Activated CD8-positive, alpha-beta T cell treated with anti-CD3 and anti-CD28 coated beads for 36 hours (primary cell): ENCODE measurements at regions of chr16 and their contacts with region 1.

Region 1: DNA sequence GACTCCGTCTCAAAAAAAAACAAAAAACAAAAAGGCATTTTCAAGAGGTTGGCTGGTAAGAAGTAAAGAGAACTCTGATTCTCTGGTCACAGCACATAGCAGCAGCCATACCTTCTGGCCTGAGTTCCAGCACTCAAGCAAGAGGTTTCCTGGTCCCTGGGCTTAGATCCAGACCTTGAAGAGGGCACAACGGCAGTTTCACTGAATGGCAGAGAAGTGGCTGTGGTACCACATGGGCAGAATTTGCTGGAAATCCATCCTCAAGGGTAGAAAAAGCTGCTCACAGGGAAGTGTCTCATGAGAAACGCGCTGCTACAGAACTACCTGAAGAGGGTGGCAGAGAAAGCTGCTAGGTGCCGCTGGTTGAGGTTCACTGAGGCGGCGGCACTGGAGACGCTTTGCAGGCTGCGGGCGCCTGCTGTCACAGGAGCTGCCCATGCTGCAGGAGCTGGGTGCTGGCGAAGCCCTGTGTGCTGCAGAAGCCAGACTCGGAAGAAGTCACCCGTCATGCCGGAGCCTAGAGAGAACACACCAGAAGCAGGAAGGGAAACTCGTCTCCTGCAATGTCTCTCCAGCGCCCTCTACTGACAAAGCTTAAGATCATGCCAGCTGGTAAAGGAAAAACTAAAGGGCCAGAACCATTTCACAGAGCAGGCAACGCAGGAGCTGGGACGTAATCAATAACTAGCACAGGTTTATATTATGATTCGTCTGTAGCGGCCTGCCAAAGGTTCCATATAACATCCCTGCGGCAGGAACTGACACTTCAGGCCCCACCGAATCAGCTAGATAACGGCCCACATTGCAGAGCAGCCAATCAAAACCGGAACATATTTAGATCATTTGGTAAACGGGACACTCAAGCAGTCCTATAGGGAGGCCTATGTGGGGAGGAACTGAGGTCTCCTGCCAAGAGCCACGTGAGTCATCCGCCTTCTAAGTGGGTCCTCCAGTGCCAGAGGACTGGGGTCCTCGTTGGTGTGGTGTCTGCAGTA is 5.4 kb upstream of the ZNF213 start:
- DNase-seq: peak; percentile 79
- ATAC-seq: peak; percentile 77
- H3K4me3 Mint-ChIP-seq: peak overlapping the region; percentile 85
- H3K27ac Mint-ChIP-seq: peak overlapping the region; percentile 86
- H3K4me1 Mint-ChIP-seq: peaks cover 42% of the 10 kb centered on the region
- H3K27me3 Mint-ChIP-seq: no peaks in the 10 kb centered on the region
- CTCF ChIP-seq: peak; percentile 96

Region 2: DNA sequence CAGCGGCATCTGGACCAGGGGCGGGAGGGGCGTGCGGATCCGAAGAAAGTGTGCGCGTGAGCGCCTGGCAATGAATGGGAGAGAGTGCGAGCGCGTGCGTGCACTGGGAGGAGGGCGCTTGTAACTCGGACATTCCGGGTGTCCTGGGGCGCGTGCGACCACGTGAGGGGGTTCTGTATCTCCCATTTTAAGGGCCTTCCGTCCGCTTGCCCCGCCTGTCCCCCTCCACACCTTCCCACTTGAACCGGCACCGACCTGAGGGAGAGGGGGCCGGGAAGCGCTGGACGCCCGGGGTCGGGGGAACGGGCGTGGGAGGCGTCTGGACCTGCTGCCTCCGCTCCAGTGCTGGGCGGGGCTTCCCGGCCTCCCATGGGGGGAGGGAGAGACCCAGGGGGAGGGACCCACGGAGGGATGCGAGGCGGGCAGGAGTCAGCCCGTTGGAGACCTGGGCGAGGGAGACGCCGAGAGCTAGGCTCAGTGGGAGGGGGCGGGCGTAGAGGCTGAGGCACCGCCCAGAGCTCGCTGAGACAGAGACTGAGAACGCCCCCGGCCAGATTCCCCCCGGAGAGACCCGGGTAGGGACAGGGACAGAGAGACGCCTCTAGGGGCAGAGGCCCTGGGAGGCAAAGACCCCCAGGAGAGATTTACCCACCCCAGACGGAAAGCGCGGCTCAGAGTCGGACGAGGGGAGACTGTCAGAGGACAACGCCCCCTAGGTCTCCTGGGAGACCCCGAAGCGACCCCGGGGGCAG is 165.5 kb before region 1 on chr16 and contains the start of gene KREMEN2:
- CTCF ChIA-PET with region 1: no interaction called
- POLR2A ChIA-PET with region 1: no interaction called
- intact Hi-C with region 1: no loop called
- DNase-seq: peak; percentile 59
- ATAC-seq: peak; percentile 19
- H3K4me3 Mint-ChIP-seq: peak within 1 kb of the TSS; percentile 65
- H3K27ac Mint-ChIP-seq: no peak within 1 kb of the TSS
- H3K4me1 Mint-ChIP-seq: peaks cover 30% of the 10 kb centered on the region
- H3K27me3 Mint-ChIP-seq: peaks cover 34% of the 10 kb centered on the region
- CTCF ChIP-seq: no peak
- total RNA-seq, gene KREMEN2: 0.22 TPM in 1 of 2 experiments, not detected in the other

Region 3: GRCh38 chr16:2980227-2981086 is 149.0 kb before region 1 on chr16 and contains the start of gene PKMYT1:
- CTCF ChIA-PET with region 1: no interaction called
- POLR2A ChIA-PET with region 1: no interaction called
- intact Hi-C with region 1: no loop called
- DNase-seq: peak; percentile 94
- ATAC-seq: peak; percentile 94
- H3K4me3 Mint-ChIP-seq: peak within 1 kb of the TSS; percentile 87
- H3K27ac Mint-ChIP-seq: peak within 1 kb of the TSS; percentile 86
- H3K4me1 Mint-ChIP-seq: peaks cover 13% of the 10 kb centered on the region
- H3K27me3 Mint-ChIP-seq: no peaks in the 10 kb centered on the region
- CTCF ChIP-seq: no peak
- total RNA-seq, gene PKMYT1: 121 to 123 TPM

Region 4: DNA sequence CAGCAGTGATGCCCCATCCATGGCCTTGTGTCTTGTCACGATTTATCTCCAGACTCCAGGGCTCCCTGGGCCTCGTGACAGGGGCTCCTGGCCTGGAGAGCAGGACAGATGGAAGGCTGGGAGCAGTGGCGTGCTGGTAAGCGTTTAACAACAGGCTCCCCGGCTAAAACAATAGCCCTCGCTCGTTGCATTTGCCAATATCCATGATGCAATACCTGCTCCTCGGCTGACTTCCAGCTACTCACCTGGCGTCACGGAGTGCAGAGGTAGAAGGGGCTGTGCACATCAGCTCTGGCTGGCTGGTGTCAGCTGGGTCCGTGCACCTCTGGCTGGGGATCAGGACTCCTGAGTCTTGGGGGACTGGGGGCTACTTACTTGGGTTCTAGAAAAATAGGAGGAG is 91.2 kb before region 1 on chr16:
- CTCF ChIA-PET with region 1: interaction called, 19 read pairs
- POLR2A ChIA-PET with region 1: no interaction called
- intact Hi-C with region 1: no loop called
- DNase-seq: no peak
- ATAC-seq: no peak
- H3K4me3 Mint-ChIP-seq: no peak overlapping the region
- H3K27ac Mint-ChIP-seq: no peak overlapping the region
- H3K4me1 Mint-ChIP-seq: peaks cover 8% of the 10 kb centered on the region
- H3K27me3 Mint-ChIP-seq: peaks cover 65% of the 10 kb centered on the region
- CTCF ChIP-seq: no peak

Region 5: GRCh38 chr16:3065069-3065741 is 64.2 kb before region 1 on chr16 and contains the start of gene IL32:
- CTCF ChIA-PET with region 1: interaction called, 288 read pairs
- POLR2A ChIA-PET with region 1: interaction called, 22 read pairs
- intact Hi-C with region 1: loop called (anchors 2 kb)
- DNase-seq: peak; percentile 77
- ATAC-seq: peak; percentile 55
- H3K4me3 Mint-ChIP-seq: peak within 1 kb of the TSS; percentile 97
- H3K27ac Mint-ChIP-seq: peak within 1 kb of the TSS; percentile 99
- H3K4me1 Mint-ChIP-seq: peaks cover 55% of the 10 kb centered on the region
- H3K27me3 Mint-ChIP-seq: no peaks in the 10 kb centered on the region
- CTCF ChIP-seq: no peak
- total RNA-seq, gene IL32: 971 to 974 TPM

Region 6: GRCh38 chr16:3099732-3100499 is 29.5 kb before region 1 on chr16:
- CTCF ChIA-PET with region 1: interaction called, 376 read pairs
- POLR2A ChIA-PET with region 1: interaction called, 21 read pairs
- intact Hi-C with region 1: no loop called
- DNase-seq: peak; percentile 98
- ATAC-seq: peak; percentile 92
- H3K4me3 Mint-ChIP-seq: peak overlapping the region; percentile 62
- H3K27ac Mint-ChIP-seq: peak overlapping the region; percentile 83
- H3K4me1 Mint-ChIP-seq: peaks cover 31% of the 10 kb centered on the region
- H3K27me3 Mint-ChIP-seq: no peaks in the 10 kb centered on the region
- CTCF ChIP-seq: no peak

Region 7: GRCh38 chr16:3158471-3159314 is 29.3 kb after region 1 on chr16:
- CTCF ChIA-PET with region 1: interaction called, 11 read pairs
- POLR2A ChIA-PET with region 1: interaction called, 10 read pairs
- intact Hi-C with region 1: no loop called
- DNase-seq: peak; percentile 91
- ATAC-seq: peak; percentile 83
- H3K4me3 Mint-ChIP-seq: peak overlapping the region; percentile 80
- H3K27ac Mint-ChIP-seq: peak overlapping the region; percentile 86
- H3K4me1 Mint-ChIP-seq: peaks cover 26% of the 10 kb centered on the region
- H3K27me3 Mint-ChIP-seq: peaks cover 7% of the 10 kb centered on the region
- CTCF ChIP-seq: no peak

Region 8: GRCh38 chr16:3274490-3274889 is 145.1 kb after region 1 on chr16:
- CTCF ChIA-PET with region 1: no interaction called
- POLR2A ChIA-PET with region 1: no interaction called
- intact Hi-C with region 1: no loop called
- DNase-seq: no peak
- ATAC-seq: no peak
- H3K4me3 Mint-ChIP-seq: no peak overlapping the region
- H3K27ac Mint-ChIP-seq: no peak overlapping the region
- H3K4me1 Mint-ChIP-seq: no peaks in the 10 kb centered on the region
- H3K27me3 Mint-ChIP-seq: no peaks in the 10 kb centered on the region
- CTCF ChIP-seq: no peak